IMR-90 (cell line): ENCODE measurements at regions of chr2 and their contacts with region 1.

Region 1: DNA sequence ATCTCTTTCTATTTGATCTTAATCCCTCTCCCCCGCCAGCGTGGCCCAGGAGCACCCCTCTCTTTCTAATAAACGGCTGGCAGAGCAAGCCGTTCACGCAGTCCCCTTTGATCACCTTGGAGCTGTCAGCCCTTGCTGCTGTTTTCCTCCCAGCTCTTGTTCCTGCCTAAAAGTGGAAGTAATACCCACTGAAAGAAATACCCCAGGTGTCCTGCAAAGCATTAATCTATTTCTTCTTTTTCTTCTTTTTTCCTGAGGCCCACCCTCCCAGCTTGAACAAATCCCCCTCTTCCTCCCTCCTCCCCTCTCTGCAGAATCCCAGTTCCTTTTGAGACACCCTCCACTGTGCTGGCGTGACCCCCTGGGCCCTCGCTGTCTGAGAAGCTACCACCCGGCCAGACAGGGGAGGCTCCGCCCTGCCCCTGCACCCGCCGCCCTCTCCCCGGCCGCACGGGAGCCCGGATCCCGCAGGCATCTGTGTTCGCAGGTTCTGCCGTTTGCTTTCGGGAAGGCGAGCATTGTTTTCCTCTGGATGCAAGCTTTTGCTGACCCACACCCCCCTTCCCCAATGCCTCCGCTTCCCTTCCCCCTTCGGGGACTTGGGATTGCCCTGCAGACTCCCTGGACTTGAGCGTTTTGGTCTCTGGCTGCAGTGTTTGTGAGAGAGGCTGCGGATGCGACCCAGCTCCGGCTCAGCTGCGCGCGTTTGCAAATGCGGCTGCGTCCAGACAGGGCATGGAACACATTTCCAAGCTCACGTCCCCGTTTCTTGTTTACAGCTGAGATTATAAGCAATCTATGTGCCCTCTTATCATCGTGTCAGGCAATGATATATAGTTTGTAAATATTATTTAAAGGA is 631.5 kb downstream of the NYAP2 start:
- DNase-seq: peak; percentile 69
- ATAC-seq: peak; percentile 92
- H3K4me3 ChIP-seq: peak overlapping the region; percentile 52
- H3K27ac ChIP-seq: peak overlapping the region; percentile 89
- H3K4me1 ChIP-seq: peaks cover 6% of the 10 kb centered on the region
- H3K27me3 ChIP-seq: no peaks in the 10 kb centered on the region
- CTCF ChIP-seq: no peak
- POLR2A ChIP-seq: no peak
- RAD21 ChIP-seq: peak; percentile 33

Region 2: DNA sequence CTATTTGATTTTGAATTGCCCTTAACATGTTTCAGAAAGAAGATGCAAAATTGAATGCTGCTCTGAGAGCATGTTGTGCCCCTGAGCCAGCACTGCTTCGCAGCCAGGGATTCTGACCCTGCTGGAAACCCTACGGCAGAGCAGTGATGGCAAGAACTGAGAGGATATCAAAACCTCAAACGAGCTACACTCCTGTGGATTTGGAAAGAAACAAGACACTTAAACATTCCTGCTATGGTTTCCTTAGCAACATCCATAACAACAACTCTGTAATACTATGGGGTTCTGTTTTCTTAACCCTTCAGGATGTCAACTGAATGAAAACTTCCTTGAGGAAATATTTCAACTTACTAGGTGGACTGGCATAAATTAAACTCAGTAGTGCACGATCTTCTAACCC is 17.6 kb after region 1 on chr2:
- CTCF ChIA-PET with region 1: no interaction called
- POLR2A ChIA-PET with region 1: no interaction called
- dilution Hi-C with region 1: no loop called
- in situ Hi-C with region 1: no loop called
- intact Hi-C with region 1: loop called (anchors 1 kb)
- DNase-seq: peak; percentile 91
- ATAC-seq: peak; percentile 90
- H3K4me3 ChIP-seq: no peak overlapping the region
- H3K27ac ChIP-seq: no peak overlapping the region
- H3K4me1 ChIP-seq: peaks cover 2% of the 10 kb centered on the region
- H3K27me3 ChIP-seq: no peaks in the 10 kb centered on the region
- CTCF ChIP-seq: no peak
- POLR2A ChIP-seq: no peak
- RAD21 ChIP-seq: 0 out of 2 replicates have a peak, but pooled peaks have one; percentile 10

Region 3: DNA sequence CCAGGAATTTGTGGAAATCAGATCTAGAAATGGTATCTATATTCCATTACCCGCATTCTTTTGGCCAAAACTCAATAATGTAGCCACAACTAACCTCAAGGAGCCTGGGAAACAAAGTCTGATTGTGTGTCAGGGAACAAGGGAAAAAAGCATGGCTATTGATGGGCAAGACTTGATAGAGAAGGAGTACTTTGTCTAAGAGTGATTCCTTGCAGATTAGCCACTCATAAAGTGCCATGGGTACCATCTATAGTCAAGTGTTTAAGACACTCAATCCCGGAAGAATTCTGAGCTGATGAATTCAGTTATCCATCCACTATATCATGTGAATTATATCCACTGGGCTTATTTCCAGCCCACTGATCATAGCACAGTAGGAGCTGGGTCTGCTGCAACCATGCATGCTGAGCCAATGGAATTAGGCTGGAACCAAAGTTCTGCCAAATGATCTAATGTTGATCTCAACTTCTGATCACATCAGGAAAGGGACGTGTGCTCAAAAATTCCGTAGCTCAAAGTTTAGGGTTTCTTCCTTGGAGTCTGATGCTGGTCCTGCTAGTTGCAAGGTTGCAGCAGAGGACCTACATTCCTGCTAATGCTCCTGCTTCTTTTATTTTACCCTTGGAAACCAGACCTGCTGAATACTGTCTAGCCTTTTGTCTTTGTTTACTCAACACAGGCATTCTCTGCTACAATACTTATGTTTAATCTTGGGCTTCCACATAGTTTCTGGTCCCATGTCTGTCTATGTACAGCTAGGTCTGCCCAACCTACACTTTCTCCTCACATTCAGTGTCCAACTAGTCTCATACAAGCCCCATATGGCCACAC is 138.9 kb after region 1 on chr2:
- CTCF ChIA-PET with region 1: no interaction called
- POLR2A ChIA-PET with region 1: no interaction called
- dilution Hi-C with region 1: no loop called
- in situ Hi-C with region 1: no loop called
- intact Hi-C with region 1: no loop called
- DNase-seq: no peak
- ATAC-seq: no peak
- H3K4me3 ChIP-seq: no peak overlapping the region
- H3K27ac ChIP-seq: no peak overlapping the region
- H3K4me1 ChIP-seq: no peaks in the 10 kb centered on the region
- H3K27me3 ChIP-seq: no peaks in the 10 kb centered on the region
- CTCF ChIP-seq: no peak
- POLR2A ChIP-seq: no peak
- RAD21 ChIP-seq: no peak

Region 4: DNA sequence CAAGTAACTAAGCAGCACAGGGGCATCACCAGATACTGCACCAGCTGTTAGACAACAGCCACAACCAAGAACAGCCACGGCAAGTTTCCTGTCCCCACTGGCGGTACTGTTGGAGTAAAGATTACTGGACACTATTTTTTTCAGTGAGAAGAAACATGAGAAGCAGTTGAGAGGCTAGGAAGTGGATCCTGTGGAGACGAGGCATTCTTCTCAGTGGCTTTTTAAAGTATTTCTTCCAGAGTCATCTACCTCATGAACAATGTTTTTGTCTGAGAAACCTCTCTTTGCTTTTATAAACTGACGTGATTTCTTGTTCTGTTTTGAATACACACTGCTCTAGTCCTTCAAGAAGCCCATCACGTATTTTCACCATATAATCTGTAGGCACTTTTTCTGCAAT is 1329.3 kb after region 1 on chr2:
- CTCF ChIA-PET with region 1: no interaction called
- POLR2A ChIA-PET with region 1: no interaction called
- dilution Hi-C with region 1: no loop called
- in situ Hi-C with region 1: no loop called
- intact Hi-C with region 1: no loop called
- DNase-seq: no peak
- ATAC-seq: no peak
- H3K4me3 ChIP-seq: no peak overlapping the region
- H3K27ac ChIP-seq: no peak overlapping the region
- H3K4me1 ChIP-seq: peaks cover 2% of the 10 kb centered on the region; the same call in 1 of the 2 replicates
- H3K27me3 ChIP-seq: no peaks in the 10 kb centered on the region
- CTCF ChIP-seq: no peak
- POLR2A ChIP-seq: no peak
- RAD21 ChIP-seq: no peak